Sigmoid colon (tissue), 7 donors: ENCODE measurements at regions of chrX and their contacts with region 1.

Region 1: DNA sequence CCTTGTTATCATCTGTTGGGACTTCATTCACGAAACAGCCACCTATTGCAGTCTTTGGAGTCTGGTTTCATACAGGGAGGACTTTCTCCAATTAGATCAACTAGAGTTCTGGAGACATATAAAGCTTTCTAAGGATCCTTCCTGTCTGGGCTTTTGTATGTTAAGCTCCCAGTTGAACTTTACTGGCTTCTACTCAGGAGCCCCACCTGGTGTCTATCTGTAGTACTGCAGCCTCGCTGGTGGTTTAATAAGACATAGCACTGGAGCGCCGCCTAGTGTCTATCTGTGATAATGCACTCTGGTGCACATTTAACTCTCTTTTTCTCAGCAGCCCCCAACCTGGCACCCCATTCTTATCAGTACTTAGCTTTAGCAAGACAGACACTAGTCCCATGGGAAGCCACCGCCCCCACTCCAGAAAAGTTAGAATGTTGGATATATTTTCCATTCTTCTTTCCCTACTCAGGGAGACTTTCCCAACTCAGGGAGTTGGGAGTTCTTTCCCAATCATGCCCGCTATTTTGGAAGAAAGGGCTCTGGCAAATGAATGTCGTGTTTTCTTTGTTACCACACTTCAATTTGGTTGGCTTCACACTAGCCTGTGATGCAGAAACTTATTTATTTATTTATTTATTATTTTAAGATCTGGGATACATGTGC is 36.9 kb upstream of the SYTL4 start:
- DNase-seq: peak; percentile 92
- H3K4me3 ChIP-seq: no peak overlapping the region
- H3K27ac ChIP-seq: no peak overlapping the region
- H3K4me1 ChIP-seq: no peaks in the 10 kb centered on the region
- H3K27me3 ChIP-seq: no peaks in the 10 kb centered on the region
- CTCF ChIP-seq: peak; percentile 94 to 98 (median 98)
- EP300 ChIP-seq: no peak
- POLR2A ChIP-seq: no peak

Region 2: DNA sequence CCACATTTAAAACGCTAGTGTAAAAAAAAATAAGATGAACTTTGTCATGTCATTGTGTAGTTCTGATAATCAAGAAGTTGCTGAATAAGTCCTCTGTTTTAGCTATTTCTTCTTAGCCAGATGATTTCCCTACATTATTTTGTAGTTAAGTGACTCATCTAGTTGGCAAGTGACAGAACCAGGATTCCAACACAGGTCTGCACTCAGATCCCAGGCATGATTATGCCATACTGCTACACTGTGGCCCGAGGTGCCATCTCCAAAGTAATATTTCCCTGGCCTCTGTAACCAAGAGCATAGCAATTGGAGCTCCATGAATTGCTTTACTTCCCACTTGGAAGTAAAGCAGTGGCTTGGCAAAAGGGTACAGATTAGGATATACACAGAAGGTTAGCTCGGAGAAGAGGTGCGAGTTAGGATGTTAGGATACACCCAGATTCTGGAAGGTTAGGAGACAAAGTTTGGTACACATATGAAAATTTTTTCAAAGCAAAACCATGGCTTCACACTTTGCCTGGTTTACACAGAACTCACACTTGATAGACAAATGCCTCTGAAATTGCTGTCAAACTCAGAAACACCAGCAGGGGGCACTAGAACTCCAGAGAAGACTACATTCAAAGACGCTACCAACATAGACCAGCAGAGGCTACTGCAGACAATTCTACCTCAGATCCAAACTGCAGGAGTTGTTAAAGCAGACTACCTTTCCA is 83.4 kb before region 1 on chrX:
- intact Hi-C with region 1: loop called (anchors 1 kb)
- DNase-seq: peak; percentile 86
- H3K4me3 ChIP-seq: no peak overlapping the region
- H3K27ac ChIP-seq: peak overlapping the region; percentile 37 to 56 (median 40)
- H3K4me1 ChIP-seq: peaks cover 0 to 17% (median 10%) of the 10 kb centered on the region in 4 donors
- H3K27me3 ChIP-seq: no peaks in the 10 kb centered on the region
- CTCF ChIP-seq: peak; percentile 74 to 97 (median 91)
- EP300 ChIP-seq: no peak
- POLR2A ChIP-seq: no peak